ENCODE measurements at regions of chr1 and their contacts with region 1.

Region 1: GRCh38 chr1:236795035-236795756 is at the start of gene MTR:
- DNase-seq: peak; percentile 99
- ATAC-seq: peak; percentile 96
- H3K4me3 ChIP-seq: peak within 1 kb of the TSS; percentile 79 to 86 (median 84)
- H3K27ac ChIP-seq: peak within 1 kb of the TSS; percentile 92 to 94 (median 93)
- H3K4me1 ChIP-seq: peaks cover 39 to 42% of the 10 kb centered on the region in 2 donors
- H3K27me3 ChIP-seq: no peaks in the 10 kb centered on the region
- CTCF ChIP-seq: no peak
- POLR2A ChIP-seq: peak; percentile 89 to 93
- total RNA-seq, gene MTR: 23.0 to 46.3 (median 29.1) TPM

Region 2: DNA sequence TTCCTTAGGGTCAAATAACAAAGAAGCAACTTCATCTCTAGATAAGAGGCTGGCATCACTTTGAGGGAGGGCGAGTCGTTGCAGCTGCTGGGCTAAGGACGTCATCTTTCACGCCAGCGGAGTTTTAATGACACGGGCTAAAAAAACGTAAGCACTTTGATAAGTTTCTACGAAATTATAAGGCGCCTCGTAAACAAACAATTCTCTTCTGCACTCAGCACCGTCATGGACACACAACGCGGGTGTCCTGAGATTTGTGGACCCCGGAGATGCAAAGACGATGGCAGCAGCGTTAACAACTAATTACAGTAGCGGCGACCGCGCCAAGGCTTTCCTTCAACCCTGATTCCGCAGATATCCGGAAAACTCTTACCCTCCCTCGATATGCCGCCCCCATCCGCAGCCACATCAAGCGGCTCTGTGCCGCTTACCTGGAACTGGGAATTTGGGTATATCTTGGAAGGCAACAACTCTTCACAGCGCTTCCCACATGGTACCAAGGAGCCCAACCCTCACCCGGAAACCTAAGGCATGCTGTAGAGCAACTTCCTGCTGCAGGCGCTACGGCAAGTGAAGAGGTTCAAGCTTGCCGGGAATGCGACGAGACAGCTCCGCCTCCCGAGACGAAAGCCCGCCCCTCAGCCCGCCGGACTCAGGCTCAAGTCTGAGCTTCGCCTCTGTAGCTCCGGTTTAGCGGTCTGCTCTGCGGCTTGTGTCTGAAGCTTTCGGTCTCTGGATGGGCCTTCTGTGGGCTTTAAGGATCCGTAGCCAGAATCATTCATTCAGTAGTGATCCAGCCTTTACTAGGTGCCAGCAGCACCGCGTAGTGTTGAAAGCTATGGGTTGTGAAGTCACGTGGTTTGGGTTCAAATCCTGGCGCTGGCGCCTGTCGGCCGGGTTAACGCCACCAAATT is 190.9 kb before region 1 on chr1 and contains the start of gene HEATR1:
- in situ Hi-C with region 1: loop called in 2 of 4 experiments (anchors 10 kb)
- intact Hi-C with region 1: loop called (anchors 1 kb)
- DNase-seq: peak; percentile 92 to 93
- ATAC-seq: peak; percentile 96 to 97
- H3K4me3 ChIP-seq: peak within 1 kb of the TSS; percentile 75 to 88 (median 86)
- H3K27ac ChIP-seq: peak within 1 kb of the TSS; percentile 87 to 94 (median 89)
- H3K4me1 ChIP-seq: peaks cover 10 to 16% of the 10 kb centered on the region in 2 donors
- H3K27me3 ChIP-seq: no peaks in the 10 kb centered on the region
- CTCF ChIP-seq: peak in 1 of 5 experiments; percentile 9
- POLR2A ChIP-seq: peak; percentile 57 to 58
- total RNA-seq, gene HEATR1: 11.6 to 17.5 (median 15.8) TPM

Region 3: GRCh38 chr1:236759252-236759859 is 35.8 kb before region 1 on chr1:
- in situ Hi-C with region 1: no loop called
- intact Hi-C with region 1: no loop called
- DNase-seq: no peak
- ATAC-seq: peak; percentile 27 to 53
- H3K4me3 ChIP-seq: no peak overlapping the region
- H3K27ac ChIP-seq: peak overlapping the region in 2 of 4 donors; percentile 45 to 47
- H3K4me1 ChIP-seq: peaks cover 0 to 4% of the 10 kb centered on the region in 2 donors
- H3K27me3 ChIP-seq: no peaks in the 10 kb centered on the region
- CTCF ChIP-seq: peak in 4 of 5 experiments; percentile 31 to 66 (median 51)
- POLR2A ChIP-seq: no peak

Region 4: GRCh38 chr1:236808564-236809130 is 13.5 kb after region 1 on chr1:
- in situ Hi-C with region 1: no loop called
- intact Hi-C with region 1: no loop called
- DNase-seq: no peak
- ATAC-seq: peak in 1 of 2 donors; percentile 11
- H3K4me3 ChIP-seq: no peak overlapping the region
- H3K27ac ChIP-seq: peak overlapping the region in 2 of 4 donors; percentile 19 to 51
- H3K4me1 ChIP-seq: peaks cover 13 to 15% of the 10 kb centered on the region in 2 donors
- H3K27me3 ChIP-seq: no peaks in the 10 kb centered on the region
- CTCF ChIP-seq: no peak
- POLR2A ChIP-seq: no peak

Measured in gastrocnemius medialis (tissue), 4 donors.